Mammary epithelial cell (primary cell): ENCODE measurements at regions of chr12 and their contacts with region 1.

Region 1: GRCh38 chr12:56387152-56387736 is 24.6 kb upstream of the APOF start:
- DNase-seq: no peak
- H3K4me3 ChIP-seq: no peak overlapping the region
- H3K27ac ChIP-seq: no peak overlapping the region
- H3K4me1 ChIP-seq: no peaks in the 10 kb centered on the region
- H3K27me3 ChIP-seq: no peaks in the 10 kb centered on the region
- CTCF ChIP-seq: no peak

Region 2: GRCh38 chr12:56348776-56349175 is 38.5 kb before region 1 on chr12:
- CTCF ChIA-PET with region 1: no interaction called
- dilution Hi-C with region 1: no loop called
- in situ Hi-C with region 1: no loop called
- intact Hi-C with region 1: no loop called
- DNase-seq: no peak
- H3K4me3 ChIP-seq: no peak overlapping the region
- H3K27ac ChIP-seq: no peak overlapping the region
- H3K4me1 ChIP-seq: no peaks in the 10 kb centered on the region
- H3K27me3 ChIP-seq: no peaks in the 10 kb centered on the region
- CTCF ChIP-seq: no peak

Region 3: DNA sequence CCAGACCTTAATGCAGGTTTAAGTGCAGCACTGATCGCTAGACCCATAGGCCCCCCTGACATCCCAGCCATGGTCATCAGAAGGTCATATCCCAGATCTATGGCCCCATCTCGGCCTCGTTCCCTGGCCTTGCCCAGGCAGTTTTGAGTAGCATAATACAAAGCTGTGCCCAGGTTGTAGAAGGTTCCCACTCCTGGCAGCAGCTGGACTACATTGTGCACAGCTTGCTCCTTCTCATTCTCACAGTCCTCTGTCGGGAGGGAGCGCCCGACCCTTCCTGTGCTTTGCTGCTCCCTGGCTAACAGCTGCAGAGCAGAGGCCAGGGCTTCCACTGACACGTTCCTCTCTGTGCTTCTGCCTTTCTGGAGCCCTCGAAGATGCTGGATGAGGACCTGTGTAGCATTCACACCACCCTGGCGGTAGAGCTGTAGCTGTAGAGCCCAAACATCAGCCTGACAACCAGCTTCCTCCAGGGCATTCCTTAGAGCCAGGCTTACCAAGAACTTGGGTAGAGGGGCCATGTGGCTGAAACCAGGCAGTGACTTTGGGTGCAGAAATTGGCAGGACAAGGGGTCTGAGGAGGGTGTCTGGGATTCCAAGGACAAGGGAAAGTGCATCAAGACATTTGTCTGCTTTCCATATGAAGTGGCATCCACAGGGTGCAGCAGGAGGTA is 25.7 kb before region 1 on chr12:
- CTCF ChIA-PET with region 1: no interaction called
- dilution Hi-C with region 1: no loop called
- in situ Hi-C with region 1: no loop called
- intact Hi-C with region 1: no loop called
- DNase-seq: no peak
- H3K4me3 ChIP-seq: no peak overlapping the region
- H3K27ac ChIP-seq: peak overlapping the region; percentile 91
- H3K4me1 ChIP-seq: peaks cover 12% of the 10 kb centered on the region
- H3K27me3 ChIP-seq: no peaks in the 10 kb centered on the region
- CTCF ChIP-seq: no peak

Region 4: DNA sequence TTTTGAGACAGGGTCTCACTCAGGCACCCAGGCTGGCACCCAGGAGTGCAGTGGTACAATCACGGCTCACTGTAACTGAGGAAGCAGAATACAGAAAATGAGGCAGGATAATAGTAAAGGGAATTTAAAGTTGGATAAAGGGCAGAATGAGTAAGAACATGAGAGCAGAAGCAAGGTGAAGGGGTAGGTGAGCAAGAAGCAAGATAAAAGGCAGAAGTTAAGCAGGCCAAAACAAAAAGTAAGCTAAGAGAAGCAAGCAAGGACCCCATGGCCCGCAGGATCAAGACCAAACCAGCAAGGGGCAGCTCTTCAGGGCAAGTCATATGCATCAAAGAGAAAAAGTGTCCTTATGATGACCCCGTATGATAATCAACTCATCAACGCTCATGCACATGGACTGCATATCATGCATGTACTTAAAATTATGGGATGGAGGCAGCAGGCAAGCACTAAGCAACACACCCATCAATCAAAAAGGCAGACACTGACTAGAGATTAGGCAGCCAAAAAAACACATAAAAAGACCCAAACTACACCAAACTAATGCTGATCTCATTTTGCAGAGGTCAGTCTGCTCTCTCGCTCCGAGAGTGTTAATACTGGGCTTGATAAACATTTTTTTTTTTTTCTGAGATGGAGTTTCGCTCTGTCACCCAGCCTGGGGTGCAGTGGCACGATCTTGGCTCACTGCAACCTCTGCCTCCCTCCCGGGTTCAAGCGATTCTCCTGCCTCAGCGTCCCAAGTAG is 50.4 kb after region 1 on chr12:
- CTCF ChIA-PET with region 1: interaction called, 37 read pairs
- dilution Hi-C with region 1: no loop called
- in situ Hi-C with region 1: no loop called
- intact Hi-C with region 1: no loop called
- DNase-seq: no peak
- H3K4me3 ChIP-seq: no peak overlapping the region
- H3K27ac ChIP-seq: no peak overlapping the region
- H3K4me1 ChIP-seq: no peaks in the 10 kb centered on the region
- H3K27me3 ChIP-seq: no peaks in the 10 kb centered on the region
- CTCF ChIP-seq: no peak

Region 5: GRCh38 chr12:56448860-56449621 is 61.8 kb after region 1 on chr12 and contains the start of gene TIMELESS:
- CTCF ChIA-PET with region 1: no interaction called
- dilution Hi-C with region 1: loop called (anchors 5 kb)
- in situ Hi-C with region 1: no loop called
- intact Hi-C with region 1: loop called (anchors 5 kb)
- DNase-seq: peak; percentile 89
- H3K4me3 ChIP-seq: peak within 1 kb of the TSS; percentile 80 to 95 (median 88)
- H3K27ac ChIP-seq: peak within 1 kb of the TSS; percentile 83
- H3K4me1 ChIP-seq: peaks cover 4% of the 10 kb centered on the region
- H3K27me3 ChIP-seq: no peaks in the 10 kb centered on the region
- CTCF ChIP-seq: peak in 1 of 2 donors; percentile 4
- total RNA-seq, gene TIMELESS: 4.5 to 21.7 TPM

Region 6: GRCh38 chr12:56490360-56490759 is 103.1 kb after region 1 on chr12:
- CTCF ChIA-PET with region 1: no interaction called
- dilution Hi-C with region 1: loop called (anchors 10 kb)
- in situ Hi-C with region 1: no loop called
- intact Hi-C with region 1: no loop called
- DNase-seq: no peak
- H3K4me3 ChIP-seq: no peak overlapping the region
- H3K27ac ChIP-seq: no peak overlapping the region
- H3K4me1 ChIP-seq: peaks cover 16% of the 10 kb centered on the region
- H3K27me3 ChIP-seq: no peaks in the 10 kb centered on the region
- CTCF ChIP-seq: no peak

Region 7: DNA sequence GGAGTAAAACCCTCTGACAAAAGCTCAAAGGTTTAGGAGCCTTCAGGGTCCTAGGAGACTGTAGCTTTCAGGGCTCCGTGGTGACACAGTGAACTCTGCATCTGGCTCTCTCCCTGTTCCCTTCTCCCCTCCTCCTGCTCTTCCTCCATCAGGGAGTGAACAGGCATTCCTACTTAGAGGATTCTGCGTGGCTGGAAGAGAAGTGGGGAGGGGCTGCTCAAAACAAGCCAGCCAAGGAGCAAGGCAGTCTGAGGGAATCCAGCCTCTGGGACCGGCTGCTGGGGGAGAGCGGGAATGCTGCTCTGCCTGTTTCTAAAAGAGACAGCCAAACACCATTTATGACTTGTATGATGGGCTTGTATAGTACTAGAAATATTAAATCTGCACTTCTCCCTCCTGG is 183.9 kb after region 1 on chr12:
- CTCF ChIA-PET with region 1: interaction called, 14 read pairs
- dilution Hi-C with region 1: no loop called
- in situ Hi-C with region 1: no loop called
- intact Hi-C with region 1: no loop called
- DNase-seq: no peak
- H3K4me3 ChIP-seq: no peak overlapping the region
- H3K27ac ChIP-seq: no peak overlapping the region
- H3K4me1 ChIP-seq: peaks cover 16% of the 10 kb centered on the region
- H3K27me3 ChIP-seq: no peaks in the 10 kb centered on the region
- CTCF ChIP-seq: no peak